ENCODE measurements at regions of chr14 and their contacts with region 1.

Region 1: GRCh38 chr14:22106700-22107697 is 433.4 kb upstream of the OR4E1 start:
- DNase-seq: no peak
- H3K4me3 ChIP-seq: no peak overlapping the region
- H3K27ac ChIP-seq: no peak overlapping the region
- H3K4me1 ChIP-seq: no peaks in the 10 kb centered on the region
- H3K27me3 ChIP-seq: no peaks in the 10 kb centered on the region
- CTCF ChIP-seq: no peak
- EP300 ChIP-seq: no peak
- POLR2A ChIP-seq: no peak

Region 2: DNA sequence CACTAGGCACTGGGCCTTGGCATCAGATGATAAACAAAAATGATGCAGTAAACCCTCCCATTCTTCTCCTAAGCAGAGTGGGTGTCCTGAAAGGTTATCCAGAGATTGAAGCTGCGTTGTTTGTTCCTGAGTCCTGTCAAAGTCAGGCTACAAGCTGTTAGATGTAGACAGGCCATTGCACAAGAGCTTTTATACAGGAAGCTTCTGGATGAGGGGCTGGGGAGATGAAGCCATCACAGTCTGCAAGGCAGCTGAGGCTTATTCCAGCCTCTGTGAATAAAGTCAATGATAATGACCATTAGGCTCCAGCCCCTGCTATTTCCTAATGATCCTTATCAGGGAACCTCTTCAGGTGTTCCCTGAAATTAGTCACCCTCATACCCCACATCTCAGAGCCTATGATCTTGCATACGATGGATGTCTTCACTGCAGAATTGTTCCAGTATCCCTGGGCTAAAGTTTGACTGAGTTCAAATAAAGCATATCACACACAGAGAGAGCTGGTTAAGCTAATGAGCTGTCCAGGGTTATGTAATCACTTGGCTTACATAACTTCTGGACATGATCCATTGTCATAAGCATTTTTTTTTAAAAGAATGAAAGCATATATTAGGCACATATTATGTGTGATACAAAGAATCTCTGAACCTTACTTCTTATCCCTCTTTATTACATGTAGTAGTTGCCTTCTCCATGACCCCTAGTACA is 96.3 kb before region 1 on chr14:
- intact Hi-C with region 1: loop called in 1 of 4 experiments (anchors 5 kb)
- DNase-seq: no peak
- H3K4me3 ChIP-seq: no peak overlapping the region
- H3K27ac ChIP-seq: no peak overlapping the region
- H3K4me1 ChIP-seq: no peaks in the 10 kb centered on the region
- H3K27me3 ChIP-seq: no peaks in the 10 kb centered on the region
- CTCF ChIP-seq: no peak
- EP300 ChIP-seq: no peak
- POLR2A ChIP-seq: no peak

Region 3: DNA sequence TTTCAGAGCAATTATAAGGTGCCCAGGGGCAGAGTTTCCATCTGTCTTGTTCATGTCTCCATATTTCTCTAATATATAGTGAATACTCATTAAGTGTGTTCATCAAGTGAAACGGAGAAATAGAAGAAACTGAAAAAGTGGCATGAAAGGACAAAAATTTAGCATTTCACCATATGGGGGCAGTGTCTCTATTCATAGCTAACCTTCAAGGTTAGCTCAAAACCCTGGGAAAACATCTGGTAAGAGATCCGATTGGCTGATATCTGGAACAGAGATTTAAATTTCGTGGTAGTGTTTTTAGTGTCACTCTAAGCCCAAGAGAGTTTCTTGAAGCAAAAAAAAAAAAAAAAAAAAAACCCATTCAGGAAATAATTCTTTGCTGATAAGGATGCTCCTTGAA is 114.5 kb after region 1 on chr14:
- intact Hi-C with region 1: no loop called
- DNase-seq: no peak
- H3K4me3 ChIP-seq: no peak overlapping the region
- H3K27ac ChIP-seq: no peak overlapping the region
- H3K4me1 ChIP-seq: no peaks in the 10 kb centered on the region
- H3K27me3 ChIP-seq: no peaks in the 10 kb centered on the region
- CTCF ChIP-seq: no peak
- EP300 ChIP-seq: no peak
- POLR2A ChIP-seq: no peak